ENCODE measurements at regions of chr17 and their contacts with region 1.

Region 1: DNA sequence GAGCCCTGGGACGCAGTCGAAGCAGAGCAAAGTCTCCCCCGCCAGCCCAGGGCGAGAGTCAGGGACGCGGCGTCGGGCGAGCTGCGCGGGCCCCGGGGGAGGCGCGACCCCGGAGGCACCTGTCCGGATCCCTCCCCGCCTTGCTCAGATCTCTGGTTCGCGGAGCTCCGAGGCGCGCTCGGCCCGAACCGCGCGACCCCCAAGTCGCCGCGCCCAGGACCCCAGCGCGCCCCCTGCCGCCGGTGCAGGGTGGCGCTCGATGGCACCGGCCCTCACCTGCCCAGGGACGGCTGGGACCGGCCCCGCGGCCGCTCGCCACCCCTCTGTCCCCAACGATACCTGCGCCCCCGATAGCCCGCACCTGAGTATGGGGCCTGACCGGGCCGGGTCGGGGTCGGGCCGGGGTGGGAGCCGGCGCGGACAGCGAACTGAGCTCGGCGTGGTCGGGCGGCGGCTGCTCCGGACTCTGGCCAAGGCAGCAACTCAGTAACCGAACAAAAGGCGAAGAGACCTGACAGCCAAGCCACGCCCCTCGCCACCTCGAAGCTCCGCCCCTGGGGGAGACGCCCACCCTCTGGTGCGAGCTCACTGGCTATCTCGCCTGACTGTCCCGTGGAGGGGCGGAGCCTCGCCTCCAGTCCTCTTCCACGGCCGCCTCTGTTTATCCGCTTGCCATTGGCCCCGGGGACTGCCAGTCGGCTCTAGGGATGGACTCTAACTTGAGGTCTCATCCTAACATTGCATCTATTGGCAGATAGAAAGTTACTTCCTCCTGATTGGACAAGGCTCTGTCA is at the start of gene JUP:
- DNase-seq: peak; percentile 100
- H3K4me3 ChIP-seq: peak within 1 kb of the TSS; percentile 48 to 86 (median 76)
- H3K27ac ChIP-seq: peak within 1 kb of the TSS; percentile 90 to 95 (median 94)
- H3K4me1 ChIP-seq: peaks cover 0 to 47% (median 31%) of the 10 kb centered on the region in 4 donors
- H3K27me3 ChIP-seq: peaks cover 10% of the 10 kb centered on the region
- CTCF ChIP-seq: peak; percentile 31 to 88 (median 52)
- EP300 ChIP-seq: no peak
- POLR2A ChIP-seq: peak; percentile 99
- total RNA-seq, gene JUP: 396 to 595 (median 513) TPM

Region 2: DNA sequence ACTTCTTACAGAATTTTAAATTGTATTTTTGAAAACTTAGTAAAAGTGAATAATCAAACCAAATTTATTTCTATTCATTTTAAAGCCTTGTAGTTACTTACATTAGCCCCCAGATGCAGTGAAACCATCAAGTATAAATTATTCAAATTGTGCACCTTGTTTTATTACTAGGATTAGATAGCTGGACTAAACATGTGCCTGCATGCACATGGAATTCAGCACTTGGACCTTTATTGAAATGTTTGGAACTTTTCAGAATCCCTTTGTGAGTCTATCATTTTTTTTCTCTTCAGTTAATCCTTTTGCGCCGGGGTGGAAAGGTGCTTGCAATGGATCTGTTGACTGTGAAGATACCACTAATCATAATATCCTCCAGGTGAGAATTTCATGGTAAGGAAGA is 1913.7 kb before region 1 on chr17:
- in situ Hi-C with region 1: no loop called
- intact Hi-C with region 1: no loop called
- DNase-seq: no peak
- H3K4me3 ChIP-seq: no peak overlapping the region
- H3K27ac ChIP-seq: no peak overlapping the region
- H3K4me1 ChIP-seq: peaks cover 0 to 4% (median 0%) of the 10 kb centered on the region in 4 donors
- H3K27me3 ChIP-seq: peaks cover 53% of the 10 kb centered on the region
- CTCF ChIP-seq: peak in 2 of 5 experiments; percentile 19 to 29
- EP300 ChIP-seq: no peak
- POLR2A ChIP-seq: no peak

Region 3: DNA sequence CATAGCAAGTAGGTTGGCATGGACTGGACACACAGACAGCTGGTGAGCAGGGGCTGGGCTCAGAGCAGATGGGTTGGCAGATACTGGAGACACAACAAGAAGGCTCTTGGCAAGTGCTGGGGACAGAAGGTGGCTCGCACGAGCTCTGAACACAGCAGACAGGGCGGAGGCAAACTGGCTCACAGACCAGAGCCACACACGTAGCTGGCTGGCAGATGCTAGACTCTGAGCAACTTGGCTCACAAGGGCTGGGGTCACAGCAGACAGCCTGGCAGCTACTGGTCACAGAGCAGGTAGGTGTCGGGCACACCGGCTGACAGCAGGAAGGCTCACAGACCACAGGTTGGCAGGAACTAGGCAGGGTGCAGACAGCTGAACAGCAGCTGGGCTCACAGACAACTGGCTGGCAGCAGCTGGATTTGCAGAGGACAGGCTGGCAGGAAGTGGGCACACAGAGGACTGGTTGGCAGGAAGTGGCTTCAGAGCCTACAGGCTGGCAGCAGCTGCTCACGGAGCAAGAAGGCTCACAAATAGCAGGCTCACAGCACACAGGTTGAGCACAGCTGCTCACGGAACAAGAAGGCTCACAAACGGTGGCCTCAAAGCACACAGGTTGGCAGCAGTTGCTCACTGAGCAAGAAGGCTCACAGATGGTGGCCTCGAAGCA is 478.0 kb before region 1 on chr17:
- in situ Hi-C with region 1: no loop called
- intact Hi-C with region 1: no loop called
- DNase-seq: peak; percentile 63
- H3K4me3 ChIP-seq: no peak overlapping the region
- H3K27ac ChIP-seq: peak overlapping the region in 2 of 4 donors; percentile 20 to 46
- H3K4me1 ChIP-seq: no peaks in the 10 kb centered on the region
- H3K27me3 ChIP-seq: no peaks in the 10 kb centered on the region
- CTCF ChIP-seq: no peak
- EP300 ChIP-seq: no peak
- POLR2A ChIP-seq: peak; percentile 21

Region 4: DNA sequence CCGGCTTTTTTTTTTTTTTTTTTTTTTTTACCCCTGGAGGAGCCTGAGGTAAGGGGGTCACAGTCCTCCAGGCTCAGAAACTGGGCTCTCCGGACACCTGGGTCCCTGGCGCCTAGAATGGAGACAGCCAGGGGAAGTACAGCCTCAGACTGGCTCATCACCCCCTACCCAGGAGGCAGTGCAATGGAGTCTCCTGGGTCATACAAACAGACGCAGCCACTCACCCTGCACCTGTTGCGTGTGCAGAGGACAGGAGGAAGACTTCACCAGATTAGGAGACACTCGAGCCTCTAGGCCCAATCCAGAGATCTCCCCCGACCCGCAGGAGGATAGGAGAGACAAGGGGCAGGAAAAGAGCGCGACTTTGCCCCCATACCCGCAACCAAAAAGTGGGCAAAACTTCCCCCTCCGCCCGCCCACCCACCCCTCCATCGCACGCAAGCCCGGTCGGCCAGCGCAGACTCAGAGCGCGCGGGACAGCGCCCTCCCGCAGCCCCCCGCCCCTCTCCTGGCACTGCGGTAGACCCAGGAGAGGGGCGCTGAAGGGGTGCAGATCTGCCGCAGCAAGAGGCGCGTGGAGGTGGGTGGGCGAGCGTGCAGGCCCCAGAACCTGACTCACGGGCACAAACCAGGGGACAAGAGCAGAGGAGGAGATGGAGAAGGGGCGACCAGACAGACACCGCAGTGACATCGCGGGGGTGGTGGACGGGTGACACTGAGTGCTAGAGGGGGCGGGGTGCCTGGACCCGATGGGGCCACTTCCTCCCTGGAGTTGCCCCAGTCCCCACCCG is 52.9 kb before region 1 on chr17:
- in situ Hi-C with region 1: no loop called
- intact Hi-C with region 1: no loop called
- DNase-seq: no peak
- H3K4me3 ChIP-seq: peak overlapping the region in 2 of 4 donors; percentile 38 to 48
- H3K27ac ChIP-seq: no peak overlapping the region
- H3K4me1 ChIP-seq: peaks cover 10 to 25% (median 17%) of the 10 kb centered on the region in 4 donors
- H3K27me3 ChIP-seq: peaks cover 79% of the 10 kb centered on the region
- CTCF ChIP-seq: no peak
- EP300 ChIP-seq: no peak
- POLR2A ChIP-seq: no peak

Region 5: GRCh38 chr17:42773290-42774035 is 987.0 kb after region 1 on chr17 and contains the start of gene VPS25:
- in situ Hi-C with region 1: no loop called
- intact Hi-C with region 1: loop called (anchors 5 kb)
- DNase-seq: peak; percentile 84
- H3K4me3 ChIP-seq: peak within 1 kb of the TSS; percentile 60 to 77 (median 72)
- H3K27ac ChIP-seq: peak within 1 kb of the TSS; percentile 86 to 89 (median 88)
- H3K4me1 ChIP-seq: peaks cover 3 to 27% (median 15%) of the 10 kb centered on the region in 4 donors
- H3K27me3 ChIP-seq: no peaks in the 10 kb centered on the region
- CTCF ChIP-seq: peak in 1 of 5 experiments; percentile 9
- EP300 ChIP-seq: no peak
- POLR2A ChIP-seq: peak; percentile 68
- total RNA-seq, gene VPS25: 58.3 to 111 (median 79.7) TPM